ENCODE measurements at regions of chr19 and their contacts with region 1.

Region 1: GRCh38 chr19:40529093-40529954 is 47.3 kb upstream of the SHKBP1 start:
- DNase-seq: peak; percentile 86 to 91 (median 88)
- ATAC-seq: peak; percentile 91
- H3K4me3 ChIP-seq: no peak overlapping the region
- H3K27ac ChIP-seq: peak overlapping the region in 2 of 4 donors; percentile 15 to 29
- H3K4me1 ChIP-seq: peaks cover 21% of the 10 kb centered on the region
- H3K27me3 ChIP-seq: no peaks in the 10 kb centered on the region
- CTCF ChIP-seq: peak; percentile 94 to 98 (median 97)
- POLR2A ChIP-seq: peak in 1 of 3 donors; percentile 9

Region 2: DNA sequence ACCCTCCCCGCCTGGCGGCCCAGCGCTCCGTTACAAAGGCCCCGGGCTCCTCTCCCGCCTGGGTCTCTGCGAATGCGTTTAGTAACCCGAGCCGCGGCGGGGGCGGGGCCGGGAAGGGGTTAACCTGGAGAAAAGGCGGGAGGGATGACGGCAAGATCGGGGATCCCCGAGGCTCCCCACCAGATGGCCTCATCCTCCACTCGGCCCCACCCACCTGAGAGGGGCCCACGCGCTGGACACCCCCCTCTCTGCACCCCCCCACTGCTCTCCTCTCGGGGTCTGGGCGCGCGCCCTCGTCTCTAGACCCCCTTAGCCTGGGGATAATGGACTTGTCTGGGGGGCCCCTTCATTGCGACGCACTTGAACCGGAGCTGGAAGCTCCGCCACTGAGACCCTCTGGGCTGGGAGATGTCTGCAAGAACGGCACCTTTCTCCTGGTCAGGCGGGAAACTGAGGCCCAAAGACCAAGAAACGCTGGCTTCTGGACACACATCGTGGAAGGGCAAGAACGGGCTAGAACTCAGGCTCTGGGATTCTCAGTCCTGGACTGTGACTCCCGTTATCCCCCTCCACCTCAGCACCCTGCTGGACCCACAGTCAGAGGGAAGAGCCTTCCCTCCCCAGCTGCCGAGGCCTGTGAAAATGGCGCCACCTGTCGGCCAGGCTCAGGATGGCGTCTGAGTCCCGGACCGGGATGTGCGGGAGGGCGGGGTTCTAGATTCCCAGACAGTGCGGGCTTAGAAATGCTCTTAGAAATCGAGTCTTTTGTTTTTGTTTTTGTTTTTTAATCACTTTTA is 69.0 kb after region 1 on chr19:
- intact Hi-C with region 1: loop called (anchors 5 kb)
- DNase-seq: peak; percentile 84 to 89 (median 86)
- ATAC-seq: peak; percentile 77
- H3K4me3 ChIP-seq: no peak overlapping the region
- H3K27ac ChIP-seq: no peak overlapping the region
- H3K4me1 ChIP-seq: peaks cover 53% of the 10 kb centered on the region
- H3K27me3 ChIP-seq: peaks cover 0 to 27% of the 10 kb centered on the region in 2 donors
- CTCF ChIP-seq: peak; percentile 93 to 99 (median 94)
- POLR2A ChIP-seq: no peak

Region 3: GRCh38 chr19:40633207-40633606 is 103.9 kb after region 1 on chr19:
- intact Hi-C with region 1: loop called (anchors 10 kb)
- DNase-seq: no peak
- ATAC-seq: no peak
- H3K4me3 ChIP-seq: no peak overlapping the region
- H3K27ac ChIP-seq: no peak overlapping the region
- H3K4me1 ChIP-seq: peaks cover 3% of the 10 kb centered on the region
- H3K27me3 ChIP-seq: no peaks in the 10 kb centered on the region
- CTCF ChIP-seq: no peak
- POLR2A ChIP-seq: no peak

Region 4: GRCh38 chr19:40690693-40691420 is 161.5 kb after region 1 on chr19:
- intact Hi-C with region 1: no loop called
- DNase-seq: peak; percentile 93 to 97 (median 94)
- ATAC-seq: peak; percentile 97
- H3K4me3 ChIP-seq: peak overlapping the region; percentile 18 to 29
- H3K27ac ChIP-seq: peak overlapping the region; percentile 59 to 87 (median 80)
- H3K4me1 ChIP-seq: peaks cover 19% of the 10 kb centered on the region
- H3K27me3 ChIP-seq: no peaks in the 10 kb centered on the region
- CTCF ChIP-seq: no peak
- POLR2A ChIP-seq: peak in 2 of 3 donors; percentile 62 to 73

Measured in body of pancreas (tissue), 4 donors.